Sigmoid colon (tissue), 7 donors: ENCODE measurements at regions of chr7 and their contacts with region 1.

Region 1: DNA sequence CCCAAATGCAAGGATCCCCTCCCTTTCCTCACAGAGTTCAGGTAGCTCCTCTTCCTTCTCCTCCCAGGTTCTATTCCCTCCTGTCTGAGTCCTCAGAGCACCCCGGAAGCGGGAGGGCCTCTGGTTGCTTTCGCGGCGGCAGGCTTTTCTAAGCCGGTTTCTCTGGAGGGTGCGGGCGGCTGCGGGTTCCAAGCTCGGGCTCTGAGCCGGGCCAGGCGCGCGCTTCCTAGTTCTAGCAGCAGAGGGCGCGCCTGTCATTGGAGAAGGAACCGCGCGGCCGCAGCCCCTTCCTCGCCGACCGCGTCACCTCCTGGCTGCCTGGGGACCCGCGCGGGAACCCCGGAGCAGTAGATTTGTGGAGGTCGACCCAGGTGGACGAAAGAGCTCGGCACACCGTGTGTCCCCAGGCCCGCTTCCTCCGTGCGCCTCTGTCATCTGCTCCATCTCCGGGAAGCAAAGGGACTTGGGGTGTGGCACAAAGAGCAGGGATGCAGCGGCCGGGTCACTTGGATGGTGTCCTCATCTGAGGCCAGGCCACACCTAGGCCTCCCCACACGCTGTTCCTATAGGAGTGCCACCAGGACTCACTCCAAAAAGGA is 389.0 kb upstream of the PODXL start:
- DNase-seq: no peak
- H3K4me3 ChIP-seq: peak overlapping the region in 3 of 4 donors; percentile 12 to 32 (median 26)
- H3K27ac ChIP-seq: no peak overlapping the region
- H3K4me1 ChIP-seq: peaks cover 0 to 15% (median 9%) of the 10 kb centered on the region in 4 donors
- H3K27me3 ChIP-seq: peaks cover 0 to 14% (median 6%) of the 10 kb centered on the region in 3 donors
- CTCF ChIP-seq: peak; percentile 29 to 92 (median 84)
- EP300 ChIP-seq: no peak
- POLR2A ChIP-seq: no peak

Region 2: GRCh38 chr7:132154248-132154647 is 208.8 kb after region 1 on chr7:
- intact Hi-C with region 1: loop called (anchors 10 kb)
- DNase-seq: no peak
- H3K4me3 ChIP-seq: no peak overlapping the region
- H3K27ac ChIP-seq: no peak overlapping the region
- H3K4me1 ChIP-seq: no peaks in the 10 kb centered on the region
- H3K27me3 ChIP-seq: no peaks in the 10 kb centered on the region
- CTCF ChIP-seq: no peak
- EP300 ChIP-seq: no peak
- POLR2A ChIP-seq: no peak